Ascending aorta (tissue), 2 donors: ENCODE measurements at regions of chr2 and their contacts with region 1.

Region 1: DNA sequence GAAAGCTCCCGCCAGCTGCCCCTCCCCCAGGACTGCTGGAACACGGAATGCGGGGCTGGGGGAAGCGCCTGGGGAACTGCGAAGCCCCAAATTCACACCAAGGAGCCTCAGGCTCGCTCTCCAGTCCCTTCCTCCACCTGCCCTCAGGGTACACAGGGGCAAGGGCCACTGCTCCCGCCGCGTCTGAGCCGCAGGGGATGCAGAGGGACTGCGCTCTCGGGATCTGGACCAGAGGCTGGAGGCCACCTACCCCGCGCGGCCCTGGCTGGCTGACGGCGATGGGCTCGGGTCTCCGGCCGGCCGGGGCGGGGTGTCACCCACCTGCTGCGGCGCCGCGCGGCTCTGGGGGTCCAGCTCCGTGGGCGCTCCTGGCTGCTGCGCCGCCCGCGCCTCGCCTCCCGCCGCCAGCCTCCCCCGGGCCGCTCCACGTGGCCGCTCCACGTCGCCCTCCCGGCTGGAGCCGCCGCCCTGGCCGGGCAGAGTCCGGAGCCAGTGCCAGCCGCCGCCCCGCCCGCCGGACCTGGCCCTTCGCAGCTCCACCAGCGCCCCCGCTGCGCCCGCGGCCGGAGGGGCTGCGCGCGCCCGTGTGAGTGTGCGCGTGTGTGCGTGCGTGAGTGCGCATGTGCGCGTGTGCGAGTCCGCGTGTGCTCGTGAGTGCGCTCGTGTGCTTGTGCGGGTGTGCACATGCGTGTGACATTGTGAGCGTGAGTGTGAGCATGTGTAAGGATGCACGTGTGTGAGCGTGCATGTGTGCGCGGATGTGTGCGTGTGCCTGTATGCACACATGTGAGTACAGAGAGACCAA is at the start of gene CGREF1:
- DNase-seq: no peak
- H3K4me3 ChIP-seq: peak within 1 kb of the TSS; percentile 62 to 63
- H3K27ac ChIP-seq: no peak within 1 kb of the TSS
- H3K4me1 ChIP-seq: peaks cover 3 to 6% of the 10 kb centered on the region in 2 donors
- H3K27me3 ChIP-seq: no peaks in the 10 kb centered on the region
- CTCF ChIP-seq: no peak
- total RNA-seq, gene CGREF1: 3.5 TPM

Region 2: DNA sequence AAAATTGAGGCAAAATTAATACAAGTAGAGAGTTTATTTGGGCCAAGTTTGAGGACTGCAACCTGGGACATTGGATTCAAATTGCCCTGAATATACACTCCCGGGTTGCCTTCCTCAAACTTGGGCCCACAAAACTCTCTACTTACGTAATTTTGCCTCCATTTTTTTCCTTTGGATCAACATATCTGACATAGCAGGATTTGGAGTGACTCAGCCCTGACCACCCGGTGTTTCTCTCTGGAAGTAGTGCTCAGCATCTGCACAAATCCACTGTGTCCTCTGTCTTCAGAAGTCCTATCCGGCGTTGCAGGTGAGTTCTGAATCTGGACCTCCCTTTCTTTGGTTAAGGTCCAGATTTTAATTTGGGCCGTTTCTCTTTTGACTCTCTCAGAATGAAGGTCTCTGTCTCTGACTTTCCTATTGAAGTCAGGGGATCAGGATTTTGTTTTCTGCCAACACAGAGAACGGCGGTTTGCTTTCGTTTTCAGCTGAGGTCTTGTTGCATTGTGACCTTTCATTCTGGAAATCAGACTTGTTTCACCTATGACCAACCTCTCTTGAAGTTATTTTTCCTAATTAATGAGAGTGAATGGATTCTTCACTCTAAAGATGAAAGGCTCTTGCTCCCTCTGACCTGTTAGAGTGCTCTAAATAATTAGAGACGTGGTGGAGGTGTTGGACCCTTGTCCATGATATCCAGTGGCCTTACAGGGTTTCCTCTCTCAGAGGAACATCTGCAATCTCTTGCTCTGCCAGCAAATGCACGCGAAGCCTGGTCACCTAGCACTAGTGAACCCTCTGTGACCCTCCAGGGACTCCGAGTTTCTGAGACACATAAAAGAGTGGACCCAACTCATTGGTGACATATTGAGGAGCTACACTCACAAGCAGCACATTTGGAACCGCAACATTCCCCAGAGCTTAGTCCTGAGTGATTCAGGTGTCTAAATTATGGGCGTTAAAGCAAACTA is 43.7 kb after region 1 on chr2:
- intact Hi-C with region 1: loop called (anchors 5 kb)
- DNase-seq: no peak
- H3K4me3 ChIP-seq: no peak overlapping the region
- H3K27ac ChIP-seq: no peak overlapping the region
- H3K4me1 ChIP-seq: no peaks in the 10 kb centered on the region
- H3K27me3 ChIP-seq: no peaks in the 10 kb centered on the region
- CTCF ChIP-seq: no peak